ENCODE measurements at regions of chr2 and their contacts with region 1.

Region 1: DNA sequence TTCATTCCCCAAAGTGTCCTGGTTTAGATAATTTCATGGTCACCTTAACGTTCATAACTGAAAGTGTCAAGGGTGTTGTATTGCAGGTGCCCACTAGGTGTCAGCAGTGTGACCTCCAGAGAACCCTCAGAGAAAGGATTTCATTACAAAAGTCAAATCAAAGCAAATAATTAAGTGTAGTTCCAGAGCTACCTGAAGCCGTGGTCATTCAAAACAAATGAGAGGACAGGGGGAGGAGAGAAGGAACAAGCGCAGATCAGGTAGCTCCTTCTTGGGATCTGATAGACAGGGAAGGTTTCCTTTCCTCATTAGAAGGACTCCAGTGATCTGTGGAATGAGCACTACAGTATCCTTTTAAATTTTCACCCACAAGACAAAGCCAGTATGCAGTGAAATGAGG is at the start of gene SLC9A4:
- DNase-seq: peak; percentile 8 to 51
- ATAC-seq: peak; percentile 66 to 75; a peak in 4 of 6 replicates
- H3K4me3 ChIP-seq: no peak within 1 kb of the TSS
- H3K27ac ChIP-seq: no peak within 1 kb of the TSS
- H3K4me1 ChIP-seq: no peaks in the 10 kb centered on the region
- CTCF ChIP-seq: peak; percentile 89
- EP300 ChIP-seq: no peak
- POLR2A ChIP-seq: no peak
- RAD21 ChIP-seq: peak; percentile 80 to 81
- polyA plus RNA-seq, gene SLC9A4: not detected in 2 replicates

Region 2: DNA sequence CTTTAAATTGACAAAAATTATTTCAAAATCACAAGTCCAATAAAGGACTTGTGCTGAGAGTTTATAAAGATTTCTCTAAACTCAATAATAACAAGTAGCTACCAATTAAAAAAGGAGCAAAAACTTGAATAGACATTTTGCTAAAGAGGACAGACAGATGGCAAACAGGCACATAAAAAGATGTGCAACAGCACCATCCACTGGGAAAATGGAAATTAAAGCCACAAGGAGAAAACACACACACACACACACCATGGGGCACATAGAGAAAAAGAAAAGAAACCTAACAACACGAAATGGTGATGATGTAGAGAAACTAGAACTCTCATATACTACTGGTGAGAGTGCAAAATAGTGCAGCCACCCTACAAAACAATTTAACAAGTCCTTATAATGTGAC is 12.6 kb before region 1 on chr2:
- CTCF ChIA-PET with region 1: interaction called, 34 read pairs
- POLR2A ChIA-PET with region 1: no interaction called
- DNase-seq: no peak
- ATAC-seq: no peak
- H3K4me3 ChIP-seq: no peak overlapping the region
- H3K27ac ChIP-seq: no peak overlapping the region
- H3K4me1 ChIP-seq: no peaks in the 10 kb centered on the region
- CTCF ChIP-seq: no peak
- EP300 ChIP-seq: no peak
- POLR2A ChIP-seq: no peak
- RAD21 ChIP-seq: no peak

Region 3: DNA sequence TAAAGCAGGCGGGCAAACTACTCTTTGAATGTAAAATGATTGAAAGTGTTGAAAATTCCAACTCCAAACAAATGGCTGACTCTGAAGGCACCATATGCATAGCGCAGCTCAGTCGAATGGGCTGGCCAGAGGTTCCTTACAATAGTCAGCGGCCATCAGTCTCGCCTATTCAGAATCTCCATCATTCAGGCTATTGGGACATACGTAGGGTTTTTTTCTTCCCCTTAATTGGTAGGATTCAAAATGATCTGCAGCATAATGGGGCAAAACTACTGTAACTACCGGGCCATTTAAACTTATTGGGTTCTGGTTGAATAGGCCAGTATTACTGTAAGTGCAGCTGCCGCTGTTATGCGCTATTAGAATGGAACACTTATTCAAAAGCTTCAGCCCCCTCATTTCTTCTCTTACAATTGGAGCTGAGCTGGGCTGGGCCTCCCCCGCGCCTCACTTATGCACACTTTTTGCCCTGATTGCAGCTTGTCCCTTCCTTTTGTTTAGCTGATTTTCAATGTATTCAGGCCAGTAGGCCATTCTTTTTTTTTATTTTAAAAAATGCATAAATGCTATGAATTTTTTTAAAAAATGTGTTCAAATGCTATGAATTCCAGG is 40.4 kb after region 1 on chr2:
- CTCF ChIA-PET with region 1: interaction called, 12 read pairs
- POLR2A ChIA-PET with region 1: no interaction called
- DNase-seq: no peak
- ATAC-seq: peak in 1 of 2 experiments; percentile 32; a peak in 1 of 6 replicates
- H3K4me3 ChIP-seq: no peak overlapping the region
- H3K27ac ChIP-seq: peak overlapping the region; percentile 31 to 70; a peak in 4 of 6 replicates
- H3K4me1 ChIP-seq: peaks cover 19% of the 10 kb centered on the region
- CTCF ChIP-seq: no peak
- EP300 ChIP-seq: no peak
- POLR2A ChIP-seq: no peak
- RAD21 ChIP-seq: no peak

Region 4: GRCh38 chr2:102615622-102616436 is 142.8 kb after region 1 on chr2:
- CTCF ChIA-PET with region 1: interaction called, 95 read pairs
- POLR2A ChIA-PET with region 1: interaction called, 3 read pairs
- DNase-seq: peak; percentile 75
- ATAC-seq: peak; percentile 58 to 87; a peak in 4 of 6 replicates
- H3K4me3 ChIP-seq: no peak overlapping the region
- H3K27ac ChIP-seq: no peak overlapping the region
- H3K4me1 ChIP-seq: peaks cover 7% of the 10 kb centered on the region; the same call in 1 of the 3 replicates
- CTCF ChIP-seq: peak; percentile 86
- EP300 ChIP-seq: no peak
- POLR2A ChIP-seq: no peak
- RAD21 ChIP-seq: peak; percentile 85 to 86

Region 5: DNA sequence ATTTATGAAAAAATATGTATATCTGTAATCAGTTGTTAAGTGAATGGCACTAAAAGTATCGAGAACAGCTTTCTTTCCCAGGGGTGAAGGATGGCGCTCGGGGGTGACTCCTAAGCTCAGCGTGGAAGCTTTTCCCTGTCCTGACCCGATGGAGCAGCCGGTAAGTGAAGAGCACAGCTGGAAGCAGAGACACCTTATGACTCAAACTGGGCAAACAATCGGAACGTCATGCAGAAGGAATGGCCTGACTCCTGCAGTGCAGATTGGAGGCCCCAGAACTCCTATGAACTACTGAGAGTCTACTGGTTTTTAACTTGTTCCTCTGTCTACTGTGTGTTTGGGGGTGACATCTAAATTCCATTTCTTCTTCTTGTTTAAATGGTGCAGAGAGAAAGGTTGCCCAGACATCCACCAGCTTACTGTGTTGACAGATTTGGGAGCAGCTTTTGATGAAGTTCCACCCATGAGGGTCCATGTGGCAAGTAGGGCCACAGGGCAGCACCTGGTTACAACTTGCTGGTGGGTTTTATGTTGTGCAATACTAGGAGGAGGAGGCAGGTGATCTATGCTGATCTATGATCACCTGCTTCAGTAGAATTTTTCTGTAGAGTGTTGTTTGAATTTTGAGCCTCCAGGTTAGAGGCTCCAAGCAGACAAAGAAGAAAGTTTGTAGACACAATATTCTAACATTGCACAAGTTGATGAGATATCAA is 236.0 kb after region 1 on chr2:
- CTCF ChIA-PET with region 1: interaction called, 52 read pairs
- POLR2A ChIA-PET with region 1: no interaction called
- DNase-seq: peak; percentile 76 to 79
- ATAC-seq: peak; percentile 99 to 100
- H3K4me3 ChIP-seq: no peak overlapping the region
- H3K27ac ChIP-seq: peak overlapping the region in 1 of 2 experiments; percentile 66; a peak in 3 of 6 replicates
- H3K4me1 ChIP-seq: peaks cover 22% of the 10 kb centered on the region
- CTCF ChIP-seq: no peak
- EP300 ChIP-seq: no peak; a peak in 1 of 5 replicates
- POLR2A ChIP-seq: no peak
- RAD21 ChIP-seq: no peak